T-cell (primary cell): ENCODE measurements at regions of chr16 and their contacts with region 1.

Region 1: DNA sequence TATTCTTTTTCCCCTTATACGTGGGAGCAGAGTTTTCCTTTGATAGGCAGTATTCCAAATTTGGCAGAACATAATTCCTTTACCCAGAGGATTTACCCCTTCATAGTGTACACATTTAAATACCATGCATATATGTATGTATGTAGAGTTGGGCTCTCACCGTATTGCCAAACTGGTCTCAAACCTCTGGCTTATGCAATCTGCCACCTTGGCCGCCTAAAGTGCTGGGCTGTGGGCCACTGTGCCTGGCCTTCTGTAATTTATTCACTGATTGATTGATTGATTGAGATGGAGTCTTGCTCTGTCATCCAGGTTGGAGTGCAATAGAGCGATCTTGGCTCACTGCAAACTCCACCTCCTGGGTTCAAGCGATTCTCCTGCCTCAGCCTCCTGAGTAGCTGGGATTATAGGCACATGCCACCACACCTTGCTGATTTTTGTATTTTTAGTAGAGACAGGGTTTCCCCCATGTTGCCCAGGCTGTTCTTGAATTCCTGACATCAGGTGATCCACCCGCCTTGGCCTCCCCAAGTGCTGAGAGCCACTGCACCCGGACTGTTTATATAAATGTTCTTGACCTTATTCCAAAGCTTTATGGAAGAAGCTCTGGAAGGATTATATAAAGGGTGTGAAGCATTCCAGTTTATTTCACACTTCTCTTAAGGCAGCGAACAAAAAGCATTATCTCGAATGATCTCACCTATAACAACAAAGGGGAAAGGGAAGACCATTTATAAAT is 14.9 kb downstream of the GLG1 start:
- DNase-seq: no peak
- ATAC-seq: no peak
- H3K4me3 ChIP-seq: no peak overlapping the region
- H3K4me3 Mint-ChIP-seq: no peak overlapping the region
- H3K27ac ChIP-seq: no peak overlapping the region
- H3K27ac Mint-ChIP-seq: peak overlapping the region in 1 of 2 donors; percentile 22
- H3K4me1 ChIP-seq: peaks cover 9 to 51% of the 10 kb centered on the region in 2 experiments
- H3K4me1 Mint-ChIP-seq: peaks cover 62 to 72% (median 66%) of the 10 kb centered on the region in 3 donors
- H3K27me3 ChIP-seq: no peaks in the 10 kb centered on the region
- H3K27me3 Mint-ChIP-seq: no peaks in the 10 kb centered on the region

Region 2: GRCh38 chr16:74511961-74512360 is 80.1 kb before region 1 on chr16:
- CTCF ChIA-PET with region 1: no interaction called
- POLR2A ChIA-PET with region 1: no interaction called
- DNase-seq: no peak
- ATAC-seq: no peak
- H3K4me3 ChIP-seq: no peak overlapping the region
- H3K4me3 Mint-ChIP-seq: no peak overlapping the region
- H3K27ac ChIP-seq: no peak overlapping the region
- H3K27ac Mint-ChIP-seq: no peak overlapping the region
- H3K4me1 ChIP-seq: no peaks in the 10 kb centered on the region
- H3K4me1 Mint-ChIP-seq: peaks cover 64 to 73% (median 72%) of the 10 kb centered on the region in 3 donors
- H3K27me3 ChIP-seq: no peaks in the 10 kb centered on the region
- H3K27me3 Mint-ChIP-seq: no peaks in the 10 kb centered on the region

Region 3: GRCh38 chr16:74524926-74525325 is 67.1 kb before region 1 on chr16:
- CTCF ChIA-PET with region 1: no interaction called
- POLR2A ChIA-PET with region 1: no interaction called
- DNase-seq: no peak
- ATAC-seq: no peak
- H3K4me3 ChIP-seq: no peak overlapping the region
- H3K4me3 Mint-ChIP-seq: no peak overlapping the region
- H3K27ac ChIP-seq: no peak overlapping the region
- H3K27ac Mint-ChIP-seq: peak overlapping the region in 1 of 2 donors; percentile 30
- H3K4me1 ChIP-seq: no peaks in the 10 kb centered on the region
- H3K4me1 Mint-ChIP-seq: peaks cover 13 to 25% (median 21%) of the 10 kb centered on the region in 3 donors
- H3K27me3 ChIP-seq: no peaks in the 10 kb centered on the region
- H3K27me3 Mint-ChIP-seq: no peaks in the 10 kb centered on the region

Region 4: GRCh38 chr16:74650966-74651567 is 59.0 kb after region 1 on chr16:
- CTCF ChIA-PET with region 1: no interaction called
- POLR2A ChIA-PET with region 1: no interaction called
- DNase-seq: peak in 3 of 35 experiments; percentile 5 to 35 (median 16)
- ATAC-seq: no peak
- H3K4me3 ChIP-seq: no peak overlapping the region
- H3K4me3 Mint-ChIP-seq: no peak overlapping the region
- H3K27ac ChIP-seq: no peak overlapping the region
- H3K27ac Mint-ChIP-seq: no peak overlapping the region
- H3K4me1 ChIP-seq: peaks cover 3 to 20% of the 10 kb centered on the region in 2 experiments
- H3K4me1 Mint-ChIP-seq: peaks cover 31 to 41% (median 34%) of the 10 kb centered on the region in 3 donors
- H3K27me3 ChIP-seq: no peaks in the 10 kb centered on the region
- H3K27me3 Mint-ChIP-seq: no peaks in the 10 kb centered on the region

Region 5: DNA sequence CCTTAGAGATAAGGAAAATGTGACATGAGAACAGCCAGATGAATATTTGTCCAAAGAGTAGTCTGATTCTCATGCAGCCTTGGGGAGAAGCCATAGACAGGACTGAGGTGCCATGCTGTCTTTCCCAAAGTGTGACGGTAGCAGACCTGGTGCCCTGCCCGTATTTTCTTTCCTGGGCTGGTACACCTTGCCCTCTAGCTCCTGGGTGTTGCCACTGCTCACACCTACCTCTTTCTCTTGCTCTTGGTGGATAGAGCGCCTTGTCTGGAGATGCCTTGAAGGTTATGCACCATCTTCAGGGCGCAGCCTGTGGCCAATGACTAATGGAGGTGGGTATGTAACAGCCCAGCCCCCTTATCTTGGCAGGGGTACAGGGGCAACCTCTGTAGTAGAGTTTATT is 228.9 kb after region 1 on chr16:
- CTCF ChIA-PET with region 1: no interaction called
- POLR2A ChIA-PET with region 1: interaction called in 1 of 2 experiments, 10 read pairs
- DNase-seq: no peak
- ATAC-seq: no peak
- H3K4me3 ChIP-seq: no peak overlapping the region
- H3K4me3 Mint-ChIP-seq: no peak overlapping the region
- H3K27ac ChIP-seq: no peak overlapping the region
- H3K27ac Mint-ChIP-seq: no peak overlapping the region
- H3K4me1 ChIP-seq: no peaks in the 10 kb centered on the region
- H3K4me1 Mint-ChIP-seq: peaks cover under 1 to 7% (median under 1%) of the 10 kb centered on the region in 3 donors
- H3K27me3 ChIP-seq: peaks cover 0 to 4% of the 10 kb centered on the region in 2 experiments
- H3K27me3 Mint-ChIP-seq: peaks cover 24 to 27% of the 10 kb centered on the region in 2 donors